Endothelial cell of umbilical vein (primary cell): ENCODE measurements at regions of chr4 and their contacts with region 1.

Region 1: GRCh38 chr4:152206646-152207377 is 329.1 kb downstream of the FBXW7 start:
- DNase-seq: peak; percentile 65
- H3K4me3 ChIP-seq: no peak overlapping the region
- H3K27ac ChIP-seq: peak overlapping the region; percentile 32
- H3K4me1 ChIP-seq: peaks cover 22% of the 10 kb centered on the region
- H3K27me3 ChIP-seq: no peaks in the 10 kb centered on the region
- CTCF ChIP-seq: no peak
- POLR2A ChIP-seq: no peak

Region 2: GRCh38 chr4:152243896-152244595 is 37.2 kb after region 1 on chr4:
- CTCF ChIA-PET with region 1: no interaction called
- POLR2A ChIA-PET with region 1: no interaction called
- dilution Hi-C with region 1: no loop called
- intact Hi-C with region 1: loop called (anchors 1 kb)
- DNase-seq: peak; percentile 98
- H3K4me3 ChIP-seq: no peak overlapping the region
- H3K27ac ChIP-seq: peak overlapping the region; percentile 78
- H3K4me1 ChIP-seq: peaks cover 27% of the 10 kb centered on the region
- H3K27me3 ChIP-seq: no peaks in the 10 kb centered on the region
- CTCF ChIP-seq: no peak
- POLR2A ChIP-seq: no peak